Gastrocnemius medialis (tissue), 4 donors: ENCODE measurements at regions of chr9 and their contacts with region 1.

Region 1: GRCh38 chr9:110623462-110624025 is 44.0 kb upstream of the SVEP1 start:
- DNase-seq: no peak
- ATAC-seq: peak; percentile 47 to 49
- H3K4me3 ChIP-seq: no peak overlapping the region
- H3K27ac ChIP-seq: no peak overlapping the region
- H3K4me1 ChIP-seq: no peaks in the 10 kb centered on the region
- H3K27me3 ChIP-seq: no peaks in the 10 kb centered on the region
- CTCF ChIP-seq: peak; percentile 23 to 62 (median 50)
- POLR2A ChIP-seq: no peak

Region 2: DNA sequence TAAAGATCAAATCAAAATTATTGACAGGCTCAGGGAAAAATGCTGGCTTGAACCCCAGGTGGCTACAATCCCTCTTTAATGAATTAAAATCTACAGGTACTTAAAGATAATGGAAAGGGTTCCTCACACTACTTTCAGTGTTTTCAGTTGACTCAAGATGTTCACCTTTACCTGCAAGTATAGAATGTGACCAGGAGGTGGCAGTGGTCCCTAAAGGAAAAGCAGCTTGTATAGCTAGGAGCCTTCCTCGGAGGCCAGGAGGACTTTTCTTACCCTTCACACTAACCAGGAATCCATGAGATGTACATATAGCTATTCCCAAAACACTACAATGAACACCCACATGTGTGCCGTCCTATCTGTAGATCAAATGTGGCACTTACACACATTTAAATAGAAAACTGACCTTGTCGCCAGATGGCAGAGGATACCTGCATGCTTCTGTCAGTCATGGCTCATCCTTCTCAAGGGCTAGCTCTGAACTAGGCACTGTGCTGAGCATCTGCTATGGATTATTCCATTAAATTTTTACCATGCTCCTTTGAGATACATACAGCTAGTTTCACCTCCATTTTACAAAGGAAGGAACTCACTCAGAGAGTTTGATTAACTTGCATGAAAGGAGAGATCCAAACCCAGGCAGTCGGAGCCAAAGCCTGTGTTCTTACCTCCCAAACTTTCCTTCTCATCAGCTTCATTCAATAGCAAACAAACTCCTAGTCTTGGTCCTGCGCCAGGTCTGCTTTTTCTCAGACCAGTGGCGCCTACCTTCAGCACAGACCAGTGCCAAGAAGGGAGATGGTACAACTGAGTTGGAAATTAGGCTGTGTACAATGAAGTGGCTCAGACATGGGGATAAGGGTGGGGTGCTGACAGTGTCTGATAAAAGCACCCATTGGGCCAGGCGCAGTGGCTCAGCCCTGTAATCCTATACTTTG is 440.1 kb before region 1 on chr9:
- in situ Hi-C with region 1: loop called in 3 of 4 experiments (anchors 10 to 25 kb)
- intact Hi-C with region 1: loop called (anchors 2 kb)
- DNase-seq: peak in 1 of 2 donors; percentile 37
- ATAC-seq: peak in 1 of 2 donors; percentile 30
- H3K4me3 ChIP-seq: no peak overlapping the region
- H3K27ac ChIP-seq: no peak overlapping the region
- H3K4me1 ChIP-seq: no peaks in the 10 kb centered on the region
- H3K27me3 ChIP-seq: no peaks in the 10 kb centered on the region
- CTCF ChIP-seq: peak in 4 of 5 experiments; percentile 32 to 65 (median 59)
- POLR2A ChIP-seq: no peak

Region 3: GRCh38 chr9:110452227-110452801 is 171.2 kb before region 1 on chr9:
- in situ Hi-C with region 1: loop called in 1 of 4 experiments (anchors 10 kb)
- intact Hi-C with region 1: loop called (anchors 5 kb)
- DNase-seq: no peak
- ATAC-seq: no peak
- H3K4me3 ChIP-seq: no peak overlapping the region
- H3K27ac ChIP-seq: no peak overlapping the region
- H3K4me1 ChIP-seq: no peaks in the 10 kb centered on the region
- H3K27me3 ChIP-seq: no peaks in the 10 kb centered on the region
- CTCF ChIP-seq: peak in 1 of 5 experiments; percentile 9
- POLR2A ChIP-seq: no peak

Region 4: GRCh38 chr9:111068771-111069170 is 445.2 kb after region 1 on chr9:
- in situ Hi-C with region 1: loop called in 1 of 4 experiments (anchors 25 kb)
- intact Hi-C with region 1: no loop called
- DNase-seq: no peak
- ATAC-seq: peak; percentile 69 to 77
- H3K4me3 ChIP-seq: no peak overlapping the region
- H3K27ac ChIP-seq: peak overlapping the region; percentile 45 to 75 (median 64)
- H3K4me1 ChIP-seq: no peaks in the 10 kb centered on the region
- H3K27me3 ChIP-seq: no peaks in the 10 kb centered on the region
- CTCF ChIP-seq: no peak
- POLR2A ChIP-seq: no peak